ENCODE measurements at regions of chr7 and their contacts with region 1.

Region 1: DNA sequence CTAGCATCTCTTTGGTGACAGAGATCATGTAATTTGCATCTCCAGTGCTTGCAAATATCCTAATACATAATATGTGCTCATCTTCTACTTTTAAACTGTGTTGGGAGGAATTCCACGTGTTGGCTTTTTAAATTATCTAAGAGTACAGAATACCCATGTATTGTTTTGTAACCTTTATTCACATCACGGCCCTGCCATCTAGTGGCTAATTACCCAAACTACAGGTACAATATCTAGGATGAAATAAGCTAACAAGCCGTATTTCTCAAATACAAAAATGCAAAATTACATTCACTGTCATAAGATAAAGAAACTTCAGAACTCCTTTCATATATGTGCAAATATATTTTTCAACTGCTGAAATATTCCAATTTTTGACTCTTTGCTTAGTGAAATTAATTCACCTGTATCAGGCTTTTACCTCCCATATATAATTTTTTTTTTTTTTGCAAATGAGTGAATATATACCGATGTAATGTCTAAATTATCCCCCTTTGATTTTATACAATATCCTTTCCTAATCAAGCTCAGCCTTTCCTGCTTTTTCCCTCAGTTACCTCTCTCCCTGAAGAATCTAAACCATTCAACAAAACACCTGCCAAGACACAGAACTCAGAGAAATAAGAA is 30.3 kb upstream of the LSM8 start:
- DNase-seq: no peak
- ATAC-seq: peak; percentile 49
- H3K4me3 Mint-ChIP-seq: no peak overlapping the region
- H3K27ac Mint-ChIP-seq: no peak overlapping the region
- H3K4me1 Mint-ChIP-seq: no peaks in the 10 kb centered on the region
- H3K27me3 Mint-ChIP-seq: no peaks in the 10 kb centered on the region
- CTCF ChIP-seq: peak; percentile 71

Region 2: GRCh38 chr7:117399820-117400422 is 753.7 kb before region 1 on chr7:
- CTCF ChIA-PET with region 1: no interaction called
- POLR2A ChIA-PET with region 1: no interaction called
- intact Hi-C with region 1: loop called (anchors 5 kb)
- DNase-seq: no peak
- ATAC-seq: no peak
- H3K4me3 Mint-ChIP-seq: no peak overlapping the region
- H3K27ac Mint-ChIP-seq: no peak overlapping the region
- H3K4me1 Mint-ChIP-seq: no peaks in the 10 kb centered on the region
- H3K27me3 Mint-ChIP-seq: no peaks in the 10 kb centered on the region
- CTCF ChIP-seq: no peak

Region 3: GRCh38 chr7:117458977-117459583 is 694.6 kb before region 1 on chr7:
- CTCF ChIA-PET with region 1: interaction called, 5 read pairs
- POLR2A ChIA-PET with region 1: no interaction called
- intact Hi-C with region 1: loop called (anchors 1 kb)
- DNase-seq: no peak
- ATAC-seq: no peak
- H3K4me3 Mint-ChIP-seq: no peak overlapping the region
- H3K27ac Mint-ChIP-seq: no peak overlapping the region
- H3K4me1 Mint-ChIP-seq: no peaks in the 10 kb centered on the region
- H3K27me3 Mint-ChIP-seq: no peaks in the 10 kb centered on the region
- CTCF ChIP-seq: no peak

Region 4: GRCh38 chr7:118214051-118214832 is 60.6 kb after region 1 on chr7:
- CTCF ChIA-PET with region 1: no interaction called
- POLR2A ChIA-PET with region 1: no interaction called
- intact Hi-C with region 1: no loop called
- DNase-seq: peak; percentile 66
- ATAC-seq: peak; percentile 95
- H3K4me3 Mint-ChIP-seq: peak overlapping the region; percentile 91
- H3K27ac Mint-ChIP-seq: peak overlapping the region; percentile 80
- H3K4me1 Mint-ChIP-seq: peaks cover 13% of the 10 kb centered on the region
- H3K27me3 Mint-ChIP-seq: peaks cover 2% of the 10 kb centered on the region
- CTCF ChIP-seq: no peak

Region 5: DNA sequence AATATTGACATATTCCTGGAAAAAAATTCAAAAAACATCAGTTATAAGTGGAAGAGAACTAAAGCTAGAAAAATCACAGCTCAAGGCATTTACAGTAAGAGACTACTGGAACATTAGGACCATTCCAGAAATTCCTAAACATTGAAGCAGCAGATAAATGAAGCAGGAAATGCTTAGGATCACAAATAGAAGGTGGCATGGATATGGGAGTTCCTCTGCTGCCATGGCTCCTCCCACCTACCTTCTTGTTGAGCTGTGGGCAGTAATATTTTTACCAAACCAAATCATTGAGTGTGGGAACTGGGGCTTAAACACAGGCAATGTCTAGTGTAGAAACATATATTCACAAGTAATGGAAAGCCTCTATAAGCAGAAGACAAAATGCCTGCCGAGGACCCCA is 363.6 kb after region 1 on chr7:
- CTCF ChIA-PET with region 1: no interaction called
- POLR2A ChIA-PET with region 1: no interaction called
- intact Hi-C with region 1: loop called (anchors 10 kb)
- DNase-seq: no peak
- ATAC-seq: no peak
- H3K4me3 Mint-ChIP-seq: no peak overlapping the region
- H3K27ac Mint-ChIP-seq: no peak overlapping the region
- H3K4me1 Mint-ChIP-seq: no peaks in the 10 kb centered on the region
- H3K27me3 Mint-ChIP-seq: no peaks in the 10 kb centered on the region
- CTCF ChIP-seq: no peak